ENCODE measurements at regions of chr10 and their contacts with region 1.

Region 1: DNA sequence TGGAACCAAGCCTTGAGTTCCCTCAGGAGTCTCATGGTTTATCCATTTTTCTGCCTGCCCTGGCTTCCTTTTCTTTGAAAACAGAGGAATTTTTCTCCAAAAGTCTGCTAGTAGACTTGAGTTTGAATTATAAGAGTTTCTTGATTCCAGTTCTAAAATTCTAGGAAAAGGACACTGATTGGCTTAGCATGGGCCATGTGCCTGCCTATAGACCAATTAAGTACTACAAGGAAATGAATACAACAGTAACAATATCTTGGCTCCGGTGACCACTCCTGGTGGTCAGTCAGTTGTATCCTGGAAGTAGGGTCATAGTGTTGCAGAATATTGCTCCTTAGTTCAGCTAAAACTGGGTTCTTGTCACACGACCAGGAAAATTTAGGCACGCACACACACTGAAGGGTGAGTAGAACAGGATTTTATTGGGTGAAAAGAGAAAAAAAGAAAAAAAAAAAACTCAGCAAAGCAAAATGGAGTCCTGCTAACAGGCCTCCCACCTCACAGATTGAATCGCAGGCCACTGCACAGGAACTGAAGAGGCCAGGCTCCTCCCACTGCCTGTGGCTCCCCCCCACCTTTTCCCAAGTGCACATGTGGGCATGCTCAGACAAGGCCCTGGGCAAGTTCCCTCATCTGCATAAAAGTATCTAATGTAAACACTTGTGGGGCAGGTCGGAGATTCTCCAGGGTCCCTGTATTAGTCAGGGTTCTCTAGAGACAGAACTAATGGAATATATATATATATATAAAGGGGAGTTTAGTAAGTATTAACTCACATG is 155.1 kb downstream of the LYZL1 start:
- DNase-seq: no peak
- ATAC-seq: no peak
- H3K4me3 ChIP-seq: no peak overlapping the region
- H3K27ac ChIP-seq: no peak overlapping the region
- H3K4me1 ChIP-seq: peaks cover 2% of the 10 kb centered on the region
- H3K27me3 ChIP-seq: no peaks in the 10 kb centered on the region

Region 2: DNA sequence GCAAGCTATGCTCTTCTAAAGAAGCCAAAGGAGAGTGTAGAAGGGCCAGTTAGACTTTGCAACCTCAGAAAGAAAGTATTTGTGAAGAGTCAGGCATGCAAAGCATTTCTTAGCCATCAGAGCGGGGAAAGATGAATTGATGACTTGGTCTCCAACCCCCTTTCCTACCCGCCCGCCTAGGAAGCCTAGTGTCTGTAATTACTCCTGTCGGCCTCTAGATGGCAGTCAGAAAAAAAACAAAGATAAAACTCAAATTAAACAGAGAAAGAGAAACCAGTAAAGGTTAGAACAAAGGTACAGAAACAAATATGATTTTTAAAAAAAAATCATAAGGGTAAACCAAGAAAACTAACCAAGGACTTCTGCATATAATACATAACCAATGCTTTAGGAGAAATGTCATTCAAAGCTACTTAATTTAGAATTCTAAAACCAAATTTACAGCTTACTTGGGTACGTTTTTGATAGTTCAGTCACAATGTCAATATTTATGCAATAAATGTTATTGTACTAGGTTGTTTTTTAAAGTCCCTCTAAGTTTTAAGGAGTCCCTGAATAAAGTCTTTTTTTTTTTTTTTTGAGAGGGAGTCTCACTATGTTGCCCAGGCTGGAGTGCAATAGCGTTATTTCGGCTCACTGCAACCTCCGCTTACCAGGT is 57.5 kb before region 1 on chr10:
- intact Hi-C with region 1: loop called (anchors 5 to 10 kb)
- DNase-seq: no peak
- ATAC-seq: no peak
- H3K4me3 ChIP-seq: no peak overlapping the region
- H3K27ac ChIP-seq: no peak overlapping the region
- H3K4me1 ChIP-seq: no peaks in the 10 kb centered on the region
- H3K27me3 ChIP-seq: no peaks in the 10 kb centered on the region

Region 3: DNA sequence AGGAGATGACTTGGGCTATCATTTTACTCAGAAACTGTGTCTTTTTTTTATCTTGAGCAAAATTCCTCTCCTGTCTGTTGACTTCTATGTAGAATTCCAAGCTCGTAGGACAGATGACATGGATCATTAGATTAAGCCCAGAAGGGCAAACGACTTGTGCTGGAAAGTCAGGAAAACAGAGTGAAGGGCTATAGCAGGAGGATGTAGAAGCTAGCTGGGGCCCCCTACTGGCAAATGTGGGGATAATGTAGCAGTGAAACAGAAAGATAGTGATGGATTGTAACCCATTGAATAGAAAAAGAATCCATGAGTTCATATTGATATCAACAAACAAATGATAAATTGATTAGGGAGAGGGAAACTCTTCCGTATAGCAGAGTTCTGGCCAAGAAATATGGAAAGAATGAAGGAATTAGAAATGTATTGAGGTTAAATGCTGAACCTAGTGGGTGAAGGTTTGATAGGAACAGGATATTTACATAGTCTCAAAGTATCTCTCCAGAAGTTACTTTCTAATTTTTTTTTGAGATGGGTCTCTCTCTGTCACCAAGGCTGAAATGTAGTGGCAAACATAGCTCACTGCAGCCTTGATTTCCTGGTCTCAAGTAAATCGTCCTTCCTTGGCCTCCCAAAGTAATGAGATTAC is 51.4 kb before region 1 on chr10:
- intact Hi-C with region 1: loop called (anchors 5 to 10 kb)
- DNase-seq: peak in 1 of 3 donors; percentile 34
- ATAC-seq: peak; percentile 53 to 72
- H3K4me3 ChIP-seq: no peak overlapping the region
- H3K27ac ChIP-seq: no peak overlapping the region
- H3K4me1 ChIP-seq: no peaks in the 10 kb centered on the region
- H3K27me3 ChIP-seq: no peaks in the 10 kb centered on the region